Activated B cell treated with CpG ODN at 0.5 μM for 24 hours (primary cell): ENCODE measurements at regions of chr2 and their contacts with region 1.

Region 1: DNA sequence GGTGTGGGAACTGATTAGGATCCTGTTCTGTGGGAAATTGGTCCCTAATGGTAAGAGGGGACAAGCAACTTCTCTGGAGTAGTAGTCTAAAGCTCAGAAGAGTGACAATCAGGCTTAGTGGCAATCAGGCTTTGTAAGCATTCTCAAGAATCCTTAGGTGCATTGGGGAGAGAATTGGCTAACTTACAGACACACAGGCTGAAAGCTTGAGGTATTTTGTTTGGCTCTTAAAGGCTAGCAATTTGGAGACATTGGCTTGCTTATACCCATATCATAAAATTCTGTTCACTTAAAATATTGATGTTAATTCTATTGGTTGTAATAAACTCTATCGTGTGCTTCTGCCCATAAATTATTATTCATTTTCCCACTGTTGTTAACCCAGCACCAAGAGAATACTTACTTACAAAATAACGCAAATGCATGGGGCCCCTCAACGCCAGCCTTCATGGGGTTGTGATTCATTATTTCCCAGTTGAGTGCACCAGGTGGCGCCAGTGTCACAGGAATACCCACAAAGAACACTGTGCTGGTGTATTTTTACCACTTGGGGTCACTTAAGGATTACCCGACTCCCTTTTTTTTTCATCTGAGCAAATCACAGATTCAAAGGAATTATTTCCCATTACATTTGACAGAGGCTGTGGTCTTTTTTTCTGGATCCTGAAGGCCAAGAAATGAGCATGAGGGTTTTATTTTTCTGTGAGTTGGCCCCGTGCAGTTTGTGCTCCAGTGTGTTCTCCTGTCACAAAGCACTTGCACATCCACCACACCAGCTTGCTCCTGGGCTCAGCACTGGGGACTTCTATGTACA is 45.5 kb downstream of the DDX1 start:
- DNase-seq: peak; percentile 35
- ATAC-seq: peak; percentile 66
- H3K4me3 Mint-ChIP-seq: no peak overlapping the region
- H3K27ac Mint-ChIP-seq: no peak overlapping the region
- H3K4me1 Mint-ChIP-seq: no peaks in the 10 kb centered on the region
- H3K27me3 Mint-ChIP-seq: no peaks in the 10 kb centered on the region
- CTCF ChIP-seq: no peak

Region 2: GRCh38 chr2:15614545-15615300 is 22.5 kb before region 1 on chr2:
- CTCF ChIA-PET with region 1: no interaction called
- POLR2A ChIA-PET with region 1: no interaction called
- intact Hi-C with region 1: no loop called
- DNase-seq: no peak
- ATAC-seq: no peak
- H3K4me3 Mint-ChIP-seq: no peak overlapping the region
- H3K27ac Mint-ChIP-seq: no peak overlapping the region
- H3K4me1 Mint-ChIP-seq: no peaks in the 10 kb centered on the region
- H3K27me3 Mint-ChIP-seq: no peaks in the 10 kb centered on the region
- CTCF ChIP-seq: no peak

Region 3: DNA sequence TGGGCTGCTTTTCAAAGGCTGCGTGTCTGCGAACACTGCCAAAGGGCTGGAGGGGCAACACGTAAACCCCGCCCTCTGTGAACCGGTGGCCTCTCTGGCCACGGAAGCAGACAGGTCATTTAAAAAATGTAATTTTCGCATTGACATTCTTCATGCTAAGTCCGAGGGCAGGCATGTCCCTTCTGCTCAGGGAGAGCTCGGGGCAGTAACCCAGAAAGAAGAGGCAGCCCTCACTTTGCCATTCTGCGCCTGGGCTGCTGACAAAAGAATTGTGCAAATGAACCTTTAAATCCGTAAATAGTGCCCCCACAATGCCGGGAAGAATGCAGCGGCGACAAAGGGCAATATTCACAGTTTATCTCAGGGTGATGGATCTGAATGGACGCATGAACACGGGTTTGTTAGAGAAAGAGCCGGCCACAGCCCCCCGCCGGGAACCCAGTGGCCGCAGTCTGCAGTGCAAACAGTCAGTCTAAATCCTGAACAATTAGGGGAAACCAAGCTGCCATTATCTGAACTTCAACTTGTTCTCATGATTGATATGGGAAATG is 529.3 kb after region 1 on chr2:
- CTCF ChIA-PET with region 1: no interaction called
- POLR2A ChIA-PET with region 1: no interaction called
- intact Hi-C with region 1: no loop called
- DNase-seq: no peak
- ATAC-seq: no peak
- H3K4me3 Mint-ChIP-seq: no peak overlapping the region
- H3K27ac Mint-ChIP-seq: no peak overlapping the region
- H3K4me1 Mint-ChIP-seq: no peaks in the 10 kb centered on the region
- H3K27me3 Mint-ChIP-seq: no peaks in the 10 kb centered on the region
- CTCF ChIP-seq: no peak

Region 4: DNA sequence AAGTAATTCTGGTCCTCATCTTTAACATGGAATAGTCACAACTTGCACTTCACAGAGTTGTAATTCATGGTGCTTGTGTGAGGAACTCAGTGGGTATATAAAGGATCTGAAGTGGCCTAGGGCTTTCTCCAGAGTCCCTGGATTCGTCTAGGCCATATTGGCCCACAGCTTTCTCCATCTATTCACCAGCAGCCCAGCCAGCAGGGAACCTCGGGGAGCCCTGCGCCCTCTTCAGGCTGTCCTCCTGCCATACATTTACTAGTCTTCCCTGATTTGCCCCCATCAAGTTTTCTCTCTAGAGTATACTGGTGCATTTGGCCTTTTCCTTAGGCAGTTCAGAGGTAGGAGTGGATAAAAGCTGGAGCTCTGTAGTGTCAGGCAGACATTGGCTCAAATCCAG is 581.4 kb after region 1 on chr2:
- CTCF ChIA-PET with region 1: no interaction called
- POLR2A ChIA-PET with region 1: no interaction called
- intact Hi-C with region 1: loop called (anchors 2 kb)
- DNase-seq: no peak
- ATAC-seq: no peak
- H3K4me3 Mint-ChIP-seq: no peak overlapping the region
- H3K27ac Mint-ChIP-seq: no peak overlapping the region
- H3K4me1 Mint-ChIP-seq: no peaks in the 10 kb centered on the region
- H3K27me3 Mint-ChIP-seq: peaks cover 2% of the 10 kb centered on the region
- CTCF ChIP-seq: no peak